ENCODE measurements at regions of chr9 and their contacts with region 1.

Region 1: GRCh38 chr9:15510789-15511575 is at the start of gene PSIP1:
- DNase-seq: peak in 1 of 2 donors; percentile 90
- H3K4me3 ChIP-seq: peak within 1 kb of the TSS; percentile 67 to 75
- H3K27ac ChIP-seq: peak within 1 kb of the TSS; percentile 94
- H3K4me1 ChIP-seq: peaks cover 23% of the 10 kb centered on the region
- H3K27me3 ChIP-seq: no peaks in the 10 kb centered on the region
- CTCF ChIP-seq: peak in 1 of 3 experiments; percentile 43
- POLR2A ChIP-seq: peak in 1 of 2 donors; percentile 51
- total RNA-seq, gene PSIP1: 63.8 TPM

Region 2: GRCh38 chr9:15430920-15431844 is 79.8 kb before region 1 on chr9:
- intact Hi-C with region 1: loop called (anchors 10 kb)
- DNase-seq: no peak
- H3K4me3 ChIP-seq: no peak overlapping the region
- H3K27ac ChIP-seq: no peak overlapping the region
- H3K4me1 ChIP-seq: peaks cover 34% of the 10 kb centered on the region
- H3K27me3 ChIP-seq: no peaks in the 10 kb centered on the region
- CTCF ChIP-seq: no peak
- POLR2A ChIP-seq: no peak

Measured in vagina (tissue), 2 donors.